Activated B cell treated with CpG ODN at 0.5 μM for 24 hours (primary cell): ENCODE measurements at regions of chr17 and their contacts with region 1.

Region 1: GRCh38 chr17:30808785-30809286 is 15.7 kb downstream of the CRLF3 start:
- DNase-seq: no peak
- ATAC-seq: peak; percentile 94
- H3K4me3 Mint-ChIP-seq: peak overlapping the region; percentile 81
- H3K27ac Mint-ChIP-seq: peak overlapping the region; percentile 95
- H3K4me1 Mint-ChIP-seq: peaks cover 70% of the 10 kb centered on the region
- H3K27me3 Mint-ChIP-seq: no peaks in the 10 kb centered on the region
- CTCF ChIP-seq: no peak

Region 2: GRCh38 chr17:30824356-30825145 is 15.7 kb after region 1 on chr17 and contains the start of gene CRLF3:
- CTCF ChIA-PET with region 1: interaction called, 32 read pairs
- POLR2A ChIA-PET with region 1: interaction called, 152 read pairs
- intact Hi-C with region 1: loop called (anchors 1 kb)
- DNase-seq: peak; percentile 89
- ATAC-seq: peak; percentile 93
- H3K4me3 Mint-ChIP-seq: peak within 1 kb of the TSS; percentile 93
- H3K27ac Mint-ChIP-seq: peak within 1 kb of the TSS; percentile 88
- H3K4me1 Mint-ChIP-seq: peaks cover 48% of the 10 kb centered on the region
- H3K27me3 Mint-ChIP-seq: no peaks in the 10 kb centered on the region
- CTCF ChIP-seq: no peak
- total RNA-seq, gene CRLF3: 53.5 and 54.9 TPM in 2 replicates

Region 3: DNA sequence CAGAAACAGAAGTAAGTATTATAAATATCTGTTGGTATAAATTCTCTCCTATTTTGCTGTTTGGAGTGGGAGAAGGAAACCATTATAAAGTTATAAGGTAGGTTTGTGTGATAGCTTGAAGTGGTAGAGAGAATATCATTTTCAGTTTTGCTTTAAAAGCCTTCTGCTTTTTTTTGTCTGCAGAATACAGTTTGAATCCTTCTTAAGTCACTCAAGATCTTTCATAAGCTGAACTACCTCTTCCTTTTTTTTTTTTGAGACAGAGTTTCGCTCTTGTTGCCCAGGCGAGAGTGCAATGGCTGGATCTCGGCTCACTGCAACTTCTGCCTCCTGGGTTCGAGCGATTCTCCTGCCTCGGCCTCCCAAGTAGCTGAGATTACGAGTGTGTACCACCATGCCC is 31.9 kb after region 1 on chr17:
- CTCF ChIA-PET with region 1: no interaction called
- POLR2A ChIA-PET with region 1: interaction called, 10 read pairs
- intact Hi-C with region 1: no loop called
- DNase-seq: no peak
- ATAC-seq: peak; percentile 34
- H3K4me3 Mint-ChIP-seq: peak overlapping the region; percentile 50
- H3K27ac Mint-ChIP-seq: peak overlapping the region; percentile 83
- H3K4me1 Mint-ChIP-seq: peaks cover 8% of the 10 kb centered on the region
- H3K27me3 Mint-ChIP-seq: no peaks in the 10 kb centered on the region
- CTCF ChIP-seq: no peak

Region 4: GRCh38 chr17:30906101-30906911 is 97.5 kb after region 1 on chr17 and contains the start of gene TEFM:
- CTCF ChIA-PET with region 1: no interaction called
- POLR2A ChIA-PET with region 1: no interaction called
- intact Hi-C with region 1: loop called (anchors 5 kb)
- DNase-seq: peak; percentile 90
- ATAC-seq: peak; percentile 98
- H3K4me3 Mint-ChIP-seq: peak within 1 kb of the TSS; percentile 95
- H3K27ac Mint-ChIP-seq: peak within 1 kb of the TSS; percentile 93
- H3K4me1 Mint-ChIP-seq: peaks cover 42% of the 10 kb centered on the region
- H3K27me3 Mint-ChIP-seq: no peaks in the 10 kb centered on the region
- CTCF ChIP-seq: no peak
- total RNA-seq, gene TEFM: 23.0 and 25.2 TPM in 2 replicates

Region 5: DNA sequence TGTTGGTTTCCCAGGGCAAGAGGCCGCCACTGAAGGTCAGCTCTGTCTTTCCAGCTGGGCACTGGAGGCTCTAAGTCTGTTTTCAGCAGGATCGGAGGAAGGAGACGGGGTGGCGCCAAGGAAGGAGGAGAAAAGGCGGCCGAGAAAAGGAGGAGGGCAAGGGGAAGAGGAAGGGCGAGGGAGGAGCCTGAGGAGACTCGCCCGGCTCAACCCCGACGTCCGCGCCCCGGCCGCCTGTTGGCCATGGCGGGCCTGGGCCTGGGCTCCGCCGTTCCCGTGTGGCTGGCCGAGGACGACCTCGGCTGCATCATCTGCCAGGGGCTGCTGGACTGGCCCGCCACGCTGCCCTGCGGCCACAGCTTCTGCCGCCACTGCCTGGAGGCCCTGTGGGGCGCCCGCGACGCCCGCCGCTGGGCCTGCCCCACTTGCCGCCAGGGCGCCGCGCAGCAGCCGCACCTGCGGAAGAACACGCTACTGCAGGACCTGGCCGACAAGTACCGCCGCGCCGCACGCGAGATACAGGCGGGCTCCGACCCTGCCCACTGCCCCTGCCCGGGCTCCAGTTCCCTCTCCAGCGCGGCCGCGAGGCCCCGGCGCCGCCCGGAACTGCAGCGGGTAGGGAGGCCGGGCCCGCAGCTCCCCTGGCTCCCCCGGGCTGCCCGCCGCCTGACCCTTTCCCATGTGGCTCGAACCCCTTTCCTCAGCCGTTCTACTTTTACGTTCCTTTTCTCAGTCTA is 162.2 kb after region 1 on chr17 and contains the start of gene RNF135:
- CTCF ChIA-PET with region 1: no interaction called
- POLR2A ChIA-PET with region 1: interaction called, 7 read pairs
- intact Hi-C with region 1: loop called (anchors 5 kb)
- DNase-seq: peak; percentile 74
- ATAC-seq: peak; percentile 67
- H3K4me3 Mint-ChIP-seq: peak within 1 kb of the TSS; percentile 97
- H3K27ac Mint-ChIP-seq: peak within 1 kb of the TSS; percentile 98
- H3K4me1 Mint-ChIP-seq: peaks cover 65% of the 10 kb centered on the region
- H3K27me3 Mint-ChIP-seq: no peaks in the 10 kb centered on the region
- CTCF ChIP-seq: no peak
- total RNA-seq, gene RNF135: 16.7 and 18.5 TPM in 2 replicates

Region 6: GRCh38 chr17:31216053-31216751 is 407.4 kb after region 1 on chr17:
- CTCF ChIA-PET with region 1: interaction called, 8 read pairs
- POLR2A ChIA-PET with region 1: no interaction called
- intact Hi-C with region 1: loop called (anchors 1 kb)
- DNase-seq: no peak
- ATAC-seq: no peak
- H3K4me3 Mint-ChIP-seq: no peak overlapping the region
- H3K27ac Mint-ChIP-seq: no peak overlapping the region
- H3K4me1 Mint-ChIP-seq: no peaks in the 10 kb centered on the region
- H3K27me3 Mint-ChIP-seq: no peaks in the 10 kb centered on the region
- CTCF ChIP-seq: peak; percentile 72